Natural killer cell (primary cell): ENCODE measurements at regions of chr2 and their contacts with region 1.

Region 1: GRCh38 chr2:74482801-74483674 is at the starts of genes CCDC142 and TTC31:
- DNase-seq: peak; percentile 88 to 96
- ATAC-seq: peak; percentile 91 to 98 (median 92)
- H3K4me3 ChIP-seq: peak within 1 kb of the TSS; percentile 81
- H3K4me3 Mint-ChIP-seq: peak within 1 kb of the TSS; percentile 99
- H3K27ac ChIP-seq: peak within 1 kb of the TSS; percentile 88
- H3K27ac Mint-ChIP-seq: peak within 1 kb of the TSS; percentile 97
- H3K4me1 ChIP-seq: peaks cover 29% of the 10 kb centered on the region
- H3K4me1 Mint-ChIP-seq: peaks cover 24 to 35% of the 10 kb centered on the region in 2 donors
- H3K27me3 ChIP-seq: no peaks in the 10 kb centered on the region
- H3K27me3 Mint-ChIP-seq: no peaks in the 10 kb centered on the region
- CTCF ChIP-seq: peak; percentile 85
- total RNA-seq, gene CCDC142: 14.9 to 25.2 (median 15.6) TPM
- total RNA-seq, gene TTC31: 51.3 to 59.7 (median 53.1) TPM

Region 2: GRCh38 chr2:74421221-74421870 is 61.7 kb before region 1 on chr2 and contains the starts of genes C2orf81 and WDR54:
- intact Hi-C with region 1: loop called (anchors 2 kb)
- DNase-seq: peak; percentile 95 to 97
- ATAC-seq: peak; percentile 90 to 96 (median 94)
- H3K4me3 ChIP-seq: peak within 1 kb of the TSS; percentile 79
- H3K4me3 Mint-ChIP-seq: peak within 1 kb of the TSS; percentile 99
- H3K27ac ChIP-seq: peak within 1 kb of the TSS; percentile 99
- H3K27ac Mint-ChIP-seq: peak within 1 kb of the TSS; percentile 94 to 96
- H3K4me1 ChIP-seq: peaks cover 16% of the 10 kb centered on the region
- H3K4me1 Mint-ChIP-seq: peaks cover 20 to 28% of the 10 kb centered on the region in 2 donors
- H3K27me3 ChIP-seq: no peaks in the 10 kb centered on the region
- H3K27me3 Mint-ChIP-seq: peaks cover 0 to under 1% of the 10 kb centered on the region in 2 donors
- CTCF ChIP-seq: no peak
- total RNA-seq, gene C2orf81: 1.7 to 3.2 (median 1.7) TPM
- total RNA-seq, gene WDR54: 28.0 to 35.3 (median 28.0) TPM

Region 3: GRCh38 chr2:74472086-74472944 is 10.7 kb before region 1 on chr2 and contains the start of gene MRPL53:
- intact Hi-C with region 1: loop called (anchors 1 kb)
- DNase-seq: peak; percentile 95 to 99
- ATAC-seq: peak; percentile 90 to 96 (median 94)
- H3K4me3 ChIP-seq: peak within 1 kb of the TSS; percentile 50
- H3K4me3 Mint-ChIP-seq: peak within 1 kb of the TSS; percentile 95
- H3K27ac ChIP-seq: peak within 1 kb of the TSS; percentile 82
- H3K27ac Mint-ChIP-seq: peak within 1 kb of the TSS; percentile 97 to 98
- H3K4me1 ChIP-seq: peaks cover 24% of the 10 kb centered on the region
- H3K4me1 Mint-ChIP-seq: peaks cover 23 to 27% of the 10 kb centered on the region in 2 donors
- H3K27me3 ChIP-seq: no peaks in the 10 kb centered on the region
- H3K27me3 Mint-ChIP-seq: no peaks in the 10 kb centered on the region
- CTCF ChIP-seq: no peak
- total RNA-seq, gene MRPL53: 42.4 to 49.7 (median 42.4) TPM

Region 4: GRCh38 chr2:74507145-74507925 is 24.3 kb after region 1 on chr2 and contains the start of gene PCGF1:
- intact Hi-C with region 1: loop called (anchors 1 kb)
- DNase-seq: peak; percentile 99
- ATAC-seq: peak; percentile 88 to 97 (median 91)
- H3K4me3 ChIP-seq: peak within 1 kb of the TSS; percentile 86
- H3K4me3 Mint-ChIP-seq: peak within 1 kb of the TSS; percentile 100
- H3K27ac ChIP-seq: peak within 1 kb of the TSS; percentile 97
- H3K27ac Mint-ChIP-seq: peak within 1 kb of the TSS; percentile 100
- H3K4me1 ChIP-seq: peaks cover 46% of the 10 kb centered on the region
- H3K4me1 Mint-ChIP-seq: peaks cover 38 to 59% of the 10 kb centered on the region in 2 donors
- H3K27me3 ChIP-seq: peaks cover 12% of the 10 kb centered on the region
- H3K27me3 Mint-ChIP-seq: peaks cover 19 to 28% of the 10 kb centered on the region in 2 donors
- CTCF ChIP-seq: no peak
- total RNA-seq, gene PCGF1: 22.9 to 35.9 (median 33.2) TPM

Region 5: GRCh38 chr2:74529357-74530238 is 46.6 kb after region 1 on chr2 and contains the starts of genes AUP1 and HTRA2:
- intact Hi-C with region 1: loop called (anchors 1 kb)
- DNase-seq: peak; percentile 83 to 91
- ATAC-seq: peak; percentile 75 to 90 (median 77)
- H3K4me3 ChIP-seq: peak within 1 kb of the TSS; percentile 92
- H3K4me3 Mint-ChIP-seq: peak within 1 kb of the TSS; percentile 96
- H3K27ac ChIP-seq: peak within 1 kb of the TSS; percentile 95
- H3K27ac Mint-ChIP-seq: peak within 1 kb of the TSS; percentile 94 to 95
- H3K4me1 ChIP-seq: peaks cover 31% of the 10 kb centered on the region
- H3K4me1 Mint-ChIP-seq: peaks cover 32 to 44% of the 10 kb centered on the region in 2 donors
- H3K27me3 ChIP-seq: no peaks in the 10 kb centered on the region
- H3K27me3 Mint-ChIP-seq: no peaks in the 10 kb centered on the region
- CTCF ChIP-seq: no peak
- total RNA-seq, gene AUP1: 234 to 242 (median 237) TPM
- total RNA-seq, gene HTRA2: 32.1 to 47.6 (median 45.2) TPM

Region 6: DNA sequence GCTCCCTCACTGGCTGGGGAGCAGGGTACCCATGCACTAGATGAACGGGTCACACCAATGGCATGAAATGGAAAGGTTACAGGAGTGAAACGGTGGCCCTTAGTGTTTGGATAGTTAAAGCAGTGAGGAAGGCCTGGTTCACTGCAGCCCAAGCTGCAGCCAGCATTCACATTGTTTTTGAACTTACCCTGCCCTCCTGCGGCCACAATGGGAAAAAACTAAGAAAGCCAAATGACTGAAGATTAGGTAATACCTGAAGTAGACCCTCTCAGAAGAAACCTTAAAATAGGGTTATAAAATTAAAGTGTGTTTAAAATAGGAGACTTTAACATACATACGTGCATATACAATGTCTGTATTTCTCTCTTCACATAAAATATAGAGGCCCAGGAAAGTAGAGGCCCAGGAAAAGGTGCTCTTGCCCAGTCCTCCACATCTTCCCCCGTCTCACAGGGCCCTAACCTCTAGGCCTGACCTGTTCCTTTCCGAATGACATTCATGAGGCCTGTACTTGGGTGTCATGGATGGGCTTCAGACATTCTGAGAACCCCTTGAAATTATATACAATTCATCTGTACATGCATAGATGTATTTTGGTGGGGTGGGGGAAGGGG is 104.7 kb after region 1 on chr2:
- intact Hi-C with region 1: loop called (anchors 1 kb)
- DNase-seq: peak; percentile 48 to 82
- ATAC-seq: peak; percentile 81 to 91 (median 90)
- H3K4me3 ChIP-seq: no peak overlapping the region
- H3K4me3 Mint-ChIP-seq: no peak overlapping the region
- H3K27ac ChIP-seq: no peak overlapping the region
- H3K27ac Mint-ChIP-seq: no peak overlapping the region
- H3K4me1 ChIP-seq: no peaks in the 10 kb centered on the region
- H3K4me1 Mint-ChIP-seq: no peaks in the 10 kb centered on the region
- H3K27me3 ChIP-seq: peaks cover 2% of the 10 kb centered on the region
- H3K27me3 Mint-ChIP-seq: peaks cover 6 to 15% of the 10 kb centered on the region in 2 donors
- CTCF ChIP-seq: peak; percentile 51

Region 7: DNA sequence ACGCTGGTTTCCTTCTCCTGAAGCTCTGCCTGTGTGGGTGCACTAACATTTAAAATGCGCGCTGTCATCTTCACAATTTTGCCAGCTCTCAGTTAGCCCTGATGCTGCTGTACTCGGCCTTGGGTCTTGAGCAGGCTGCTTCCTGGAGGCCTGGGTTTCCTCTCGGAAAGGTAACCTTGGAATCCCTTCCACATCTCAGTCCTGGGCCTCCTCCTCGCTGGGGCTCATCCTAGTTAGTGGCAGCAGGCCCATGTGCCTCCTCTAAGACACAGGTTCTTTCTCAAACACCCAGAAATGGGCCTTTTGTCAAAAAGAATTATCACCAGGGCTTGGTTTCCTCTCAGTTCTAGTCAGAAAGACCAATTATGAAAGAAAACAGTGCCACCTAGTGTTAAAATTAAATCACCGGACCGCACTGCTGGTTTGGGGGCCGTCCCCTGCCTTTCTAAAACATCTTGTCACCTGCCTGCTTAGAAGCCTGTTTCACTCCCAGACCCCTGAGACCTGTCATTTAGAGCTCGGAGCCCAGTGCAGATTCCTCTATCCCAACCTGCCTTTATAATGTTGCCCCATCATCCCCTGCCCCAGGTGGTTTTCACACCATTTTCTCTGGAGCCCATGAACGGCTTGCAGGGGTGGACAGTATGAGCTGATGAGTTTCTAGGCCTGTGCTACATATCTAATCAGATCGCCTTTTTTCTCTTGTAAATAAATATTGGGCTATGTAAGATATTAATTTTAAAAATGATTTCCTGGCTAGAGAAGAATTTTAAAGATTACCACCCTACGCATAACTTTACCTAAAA is 393.2 kb after region 1 on chr2:
- intact Hi-C with region 1: loop called (anchors 2 kb)
- DNase-seq: peak in 1 of 2 donors; percentile 78
- ATAC-seq: peak; percentile 71 to 85 (median 73)
- H3K4me3 ChIP-seq: no peak overlapping the region
- H3K4me3 Mint-ChIP-seq: no peak overlapping the region
- H3K27ac ChIP-seq: no peak overlapping the region
- H3K27ac Mint-ChIP-seq: no peak overlapping the region
- H3K4me1 ChIP-seq: peaks cover 3% of the 10 kb centered on the region
- H3K4me1 Mint-ChIP-seq: no peaks in the 10 kb centered on the region
- H3K27me3 ChIP-seq: no peaks in the 10 kb centered on the region
- H3K27me3 Mint-ChIP-seq: no peaks in the 10 kb centered on the region
- CTCF ChIP-seq: peak; percentile 70